Vagina (tissue), 2 donors: ENCODE measurements at regions of chr9 and their contacts with region 1.

Region 1: DNA sequence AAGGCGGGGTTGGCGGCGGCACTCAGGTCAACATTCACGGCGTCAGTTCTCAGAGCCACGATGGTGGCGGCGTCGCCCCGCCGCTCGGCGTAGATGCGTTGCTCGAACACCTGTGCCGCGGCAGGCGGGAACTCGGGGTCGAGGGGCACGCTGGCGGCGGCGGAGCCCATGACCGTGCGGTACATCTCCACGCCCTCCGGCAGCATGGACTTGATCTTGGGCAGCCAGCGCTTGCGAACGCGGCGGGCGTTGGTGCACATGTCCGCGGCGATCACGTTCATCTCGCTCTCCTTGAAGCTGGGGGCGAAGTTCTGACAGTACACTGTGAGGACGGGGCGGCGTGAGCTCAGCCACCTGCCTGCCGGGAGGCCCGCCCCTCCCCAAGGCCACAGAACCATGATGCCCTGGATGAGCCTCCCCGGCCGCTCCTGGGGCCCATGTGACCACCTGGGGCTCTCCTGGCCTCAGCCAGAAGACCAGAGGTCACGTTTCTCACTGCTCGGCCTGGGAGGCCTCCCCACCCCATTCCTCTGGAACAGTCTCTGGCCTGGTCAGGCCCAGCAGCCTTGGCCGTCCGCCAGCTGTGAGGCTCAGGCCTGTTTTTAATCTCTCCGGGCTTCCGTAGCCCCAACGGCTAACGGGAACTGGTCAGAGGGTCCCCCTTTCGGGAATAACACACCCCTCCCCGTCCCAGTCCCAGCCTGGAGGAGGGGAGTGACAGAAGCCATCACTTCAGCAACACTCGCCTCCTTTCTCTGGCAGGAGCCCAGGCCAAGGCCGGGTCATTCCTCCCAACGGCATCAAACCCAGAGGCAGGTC is 50.7 kb upstream of the UBAC1 start:
- DNase-seq: no peak
- H3K4me3 ChIP-seq: no peak overlapping the region
- H3K27ac ChIP-seq: peak overlapping the region; percentile 51
- H3K4me1 ChIP-seq: peaks cover 40% of the 10 kb centered on the region
- H3K27me3 ChIP-seq: no peaks in the 10 kb centered on the region
- CTCF ChIP-seq: no peak
- POLR2A ChIP-seq: no peak

Region 2: DNA sequence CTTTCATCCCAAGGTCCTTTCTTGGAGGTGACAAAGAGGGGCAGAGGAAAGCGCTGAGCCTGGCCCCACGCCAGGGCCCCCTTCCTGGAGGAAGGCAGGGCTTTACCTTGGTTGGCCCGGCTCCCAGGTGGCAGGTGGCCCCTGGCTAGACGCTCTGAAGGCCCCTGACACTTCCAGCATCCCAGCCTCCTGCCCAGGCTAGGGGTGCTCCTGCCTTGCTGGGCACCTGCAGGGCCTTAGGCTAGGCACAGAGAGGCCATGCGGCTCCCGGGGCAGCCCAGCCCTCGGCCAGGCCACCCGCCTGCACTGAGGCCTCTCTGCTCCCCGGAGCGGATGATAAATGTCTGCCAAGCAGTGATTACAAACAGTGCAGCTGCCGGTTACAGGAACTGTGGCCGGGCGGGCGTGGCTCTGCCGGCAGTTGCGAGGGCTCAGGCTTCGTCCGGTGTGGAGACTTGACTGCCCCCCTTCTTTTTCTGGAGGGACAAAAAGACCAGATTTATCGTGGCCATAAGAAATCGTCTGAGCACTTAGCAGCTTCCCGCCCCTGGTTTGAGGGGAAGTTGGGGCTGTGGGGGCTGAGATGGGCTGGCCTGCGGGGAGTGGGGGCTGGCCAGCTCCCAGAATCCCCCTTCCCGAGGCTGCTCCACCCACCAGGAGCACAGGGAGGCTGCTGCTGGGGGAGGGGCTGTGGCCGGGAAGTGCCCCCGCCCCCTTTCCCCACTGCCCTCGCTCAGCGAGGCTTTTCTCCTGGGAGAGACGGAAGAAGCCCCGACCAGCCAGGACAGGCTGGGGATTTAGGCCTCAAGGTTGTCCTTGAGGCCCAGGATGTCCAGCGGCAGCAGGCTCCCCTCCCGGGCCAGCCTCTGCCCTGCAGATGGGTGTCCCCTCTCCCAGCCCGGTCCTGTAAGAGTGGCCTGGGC is 19.2 kb before region 1 on chr9:
- intact Hi-C with region 1: loop called (anchors 2 kb)
- DNase-seq: no peak
- H3K4me3 ChIP-seq: peak overlapping the region; percentile 23 to 41
- H3K27ac ChIP-seq: peak overlapping the region; percentile 61
- H3K4me1 ChIP-seq: peaks cover 35% of the 10 kb centered on the region
- H3K27me3 ChIP-seq: no peaks in the 10 kb centered on the region
- CTCF ChIP-seq: no peak
- POLR2A ChIP-seq: no peak

Region 3: GRCh38 chr9:136093995-136094881 is 82.3 kb after region 1 on chr9:
- intact Hi-C with region 1: loop called (anchors 2 kb)
- DNase-seq: no peak
- H3K4me3 ChIP-seq: peak overlapping the region; percentile 59 to 86
- H3K27ac ChIP-seq: peak overlapping the region; percentile 85
- H3K4me1 ChIP-seq: peaks cover 59% of the 10 kb centered on the region
- H3K27me3 ChIP-seq: no peaks in the 10 kb centered on the region
- CTCF ChIP-seq: no peak
- POLR2A ChIP-seq: peak in 1 of 2 donors; percentile 9